Heart right ventricle (tissue), 16 donors: ENCODE measurements at regions of chr17 and their contacts with region 1.

Region 1: GRCh38 chr17:34673995-34674870 is 94.9 kb downstream of the TMEM132E start:
- DNase-seq: no peak
- ATAC-seq: no peak
- H3K4me3 ChIP-seq: no peak overlapping the region
- H3K27ac ChIP-seq: no peak overlapping the region
- H3K4me1 ChIP-seq: no peaks in the 10 kb centered on the region
- H3K27me3 ChIP-seq: peaks cover 0 to 18% (median 8%) of the 10 kb centered on the region in 7 donors
- CTCF ChIP-seq: no peak

Region 2: DNA sequence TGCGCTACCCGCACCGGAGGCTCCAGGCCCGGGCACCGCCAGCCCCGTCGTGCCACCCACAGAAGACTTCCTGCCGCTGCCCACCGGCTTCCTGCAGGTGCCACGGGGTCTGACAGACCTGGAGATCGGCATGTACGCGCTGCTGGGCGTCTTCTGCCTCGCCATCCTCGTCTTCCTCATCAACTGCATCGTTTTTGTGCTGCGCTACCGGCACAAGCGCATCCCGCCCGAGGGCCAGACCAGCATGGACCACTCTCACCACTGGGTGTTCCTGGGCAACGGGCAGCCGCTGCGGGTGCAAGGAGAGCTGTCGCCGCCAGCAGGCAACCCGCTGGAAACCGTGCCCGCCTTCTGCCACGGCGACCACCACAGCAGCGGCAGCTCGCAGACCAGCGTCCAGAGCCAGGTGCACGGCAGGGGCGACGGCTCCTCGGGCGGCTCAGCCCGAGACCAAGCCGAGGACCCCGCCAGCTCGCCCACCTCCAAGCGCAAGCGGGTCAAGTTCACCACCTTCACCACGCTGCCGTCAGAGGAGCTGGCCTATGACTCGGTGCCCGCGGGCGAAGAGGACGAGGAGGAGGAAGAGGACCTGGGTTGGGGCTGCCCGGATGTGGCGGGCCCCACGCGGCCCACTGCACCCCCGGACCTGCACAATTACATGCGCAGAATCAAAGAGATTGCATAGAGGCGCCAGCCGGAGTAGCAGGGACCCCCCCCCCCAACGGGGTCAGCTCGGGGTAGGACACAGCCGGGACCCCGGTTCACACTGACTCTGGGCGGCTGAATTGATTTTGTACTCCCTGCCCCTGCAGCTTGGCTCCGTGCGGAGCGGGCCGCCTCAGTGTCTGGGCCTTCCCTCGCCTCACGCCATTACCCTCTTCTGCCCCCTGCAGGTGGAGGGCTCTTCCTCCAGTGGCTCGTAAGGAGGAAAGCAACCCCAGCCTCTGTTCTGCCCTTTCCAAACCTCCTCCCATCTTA is 36.4 kb before region 1 on chr17:
- intact Hi-C with region 1: no loop called
- DNase-seq: peak; percentile 73 to 75
- ATAC-seq: peak; percentile 87 to 97 (median 92)
- H3K4me3 ChIP-seq: peak overlapping the region in 9 of 10 donors; percentile 27 to 53 (median 49)
- H3K27ac ChIP-seq: no peak overlapping the region
- H3K4me1 ChIP-seq: peaks cover 0 to 11% (median 7%) of the 10 kb centered on the region in 9 donors
- H3K27me3 ChIP-seq: peaks cover 10 to 90% (median 75%) of the 10 kb centered on the region in 7 donors
- CTCF ChIP-seq: peak; percentile 67 to 89 (median 85)

Region 3: GRCh38 chr17:34739386-34739785 is 65.2 kb after region 1 on chr17:
- intact Hi-C with region 1: loop called in 1 of 10 experiments (anchors 10 kb)
- DNase-seq: no peak
- ATAC-seq: no peak
- H3K4me3 ChIP-seq: no peak overlapping the region
- H3K27ac ChIP-seq: no peak overlapping the region
- H3K4me1 ChIP-seq: no peaks in the 10 kb centered on the region
- H3K27me3 ChIP-seq: peaks cover 0 to 28% (median 15%) of the 10 kb centered on the region in 7 donors
- CTCF ChIP-seq: no peak